ENCODE measurements at regions of chr9 and their contacts with region 1.

Region 1: GRCh38 chr9:8070779-8071444 is 271.3 kb upstream of the DMAC1 start:
- DNase-seq: no peak
- ATAC-seq: no peak
- H3K4me3 ChIP-seq: no peak overlapping the region
- H3K4me3 Mint-ChIP-seq: no peak overlapping the region
- H3K27ac ChIP-seq: no peak overlapping the region
- H3K27ac Mint-ChIP-seq: no peak overlapping the region
- H3K4me1 ChIP-seq: no peaks in the 10 kb centered on the region
- H3K4me1 Mint-ChIP-seq: no peaks in the 10 kb centered on the region
- H3K27me3 ChIP-seq: no peaks in the 10 kb centered on the region
- H3K27me3 Mint-ChIP-seq: peaks cover 4% of the 10 kb centered on the region
- CTCF ChIP-seq: no peak

Region 2: DNA sequence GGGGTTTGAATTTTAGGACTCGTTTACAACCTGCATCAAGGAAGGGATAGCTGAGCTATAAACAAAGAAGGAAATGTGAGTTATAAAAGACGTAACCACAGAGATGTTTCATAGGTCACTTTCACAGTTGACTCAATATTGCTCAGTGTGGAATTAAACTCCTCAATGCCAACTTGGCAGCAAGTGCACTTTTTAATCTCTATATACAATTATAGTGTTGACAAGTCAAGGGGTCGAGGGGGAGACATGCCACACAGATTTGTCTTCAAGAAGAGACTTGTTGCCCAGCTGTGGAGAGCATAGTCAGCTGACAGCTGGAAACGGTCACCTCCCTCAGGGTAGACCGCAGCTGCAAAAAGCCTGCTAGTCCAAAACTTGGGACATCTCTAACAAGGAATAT is 107.9 kb before region 1 on chr9:
- CTCF ChIA-PET with region 1: no interaction called
- POLR2A ChIA-PET with region 1: no interaction called
- intact Hi-C with region 1: no loop called
- DNase-seq: no peak
- ATAC-seq: no peak
- H3K4me3 ChIP-seq: no peak overlapping the region
- H3K4me3 Mint-ChIP-seq: no peak overlapping the region
- H3K27ac ChIP-seq: no peak overlapping the region
- H3K27ac Mint-ChIP-seq: no peak overlapping the region
- H3K4me1 ChIP-seq: peaks cover 5 to 8% of the 10 kb centered on the region in 2 donors
- H3K4me1 Mint-ChIP-seq: peaks cover 6% of the 10 kb centered on the region
- H3K27me3 ChIP-seq: no peaks in the 10 kb centered on the region
- H3K27me3 Mint-ChIP-seq: peaks cover 9% of the 10 kb centered on the region
- CTCF ChIP-seq: no peak

Region 3: GRCh38 chr9:8030095-8030494 is 40.8 kb before region 1 on chr9:
- CTCF ChIA-PET with region 1: no interaction called
- POLR2A ChIA-PET with region 1: no interaction called
- intact Hi-C with region 1: no loop called
- DNase-seq: no peak
- ATAC-seq: no peak
- H3K4me3 ChIP-seq: no peak overlapping the region
- H3K4me3 Mint-ChIP-seq: no peak overlapping the region
- H3K27ac ChIP-seq: no peak overlapping the region
- H3K27ac Mint-ChIP-seq: no peak overlapping the region
- H3K4me1 ChIP-seq: no peaks in the 10 kb centered on the region
- H3K4me1 Mint-ChIP-seq: no peaks in the 10 kb centered on the region
- H3K27me3 ChIP-seq: no peaks in the 10 kb centered on the region
- H3K27me3 Mint-ChIP-seq: peaks cover 4% of the 10 kb centered on the region
- CTCF ChIP-seq: no peak

Region 4: GRCh38 chr9:8136477-8136876 is 65.6 kb after region 1 on chr9:
- CTCF ChIA-PET with region 1: no interaction called
- POLR2A ChIA-PET with region 1: no interaction called
- intact Hi-C with region 1: loop called (anchors 10 kb)
- DNase-seq: no peak
- ATAC-seq: no peak
- H3K4me3 ChIP-seq: no peak overlapping the region
- H3K4me3 Mint-ChIP-seq: no peak overlapping the region
- H3K27ac ChIP-seq: no peak overlapping the region
- H3K27ac Mint-ChIP-seq: no peak overlapping the region
- H3K4me1 ChIP-seq: no peaks in the 10 kb centered on the region
- H3K4me1 Mint-ChIP-seq: peaks cover 4% of the 10 kb centered on the region
- H3K27me3 ChIP-seq: no peaks in the 10 kb centered on the region
- H3K27me3 Mint-ChIP-seq: no peaks in the 10 kb centered on the region
- CTCF ChIP-seq: no peak